CD8-positive, alpha-beta T cell (primary cell): ENCODE measurements at regions of chr10 and their contacts with region 1.

Region 1: DNA sequence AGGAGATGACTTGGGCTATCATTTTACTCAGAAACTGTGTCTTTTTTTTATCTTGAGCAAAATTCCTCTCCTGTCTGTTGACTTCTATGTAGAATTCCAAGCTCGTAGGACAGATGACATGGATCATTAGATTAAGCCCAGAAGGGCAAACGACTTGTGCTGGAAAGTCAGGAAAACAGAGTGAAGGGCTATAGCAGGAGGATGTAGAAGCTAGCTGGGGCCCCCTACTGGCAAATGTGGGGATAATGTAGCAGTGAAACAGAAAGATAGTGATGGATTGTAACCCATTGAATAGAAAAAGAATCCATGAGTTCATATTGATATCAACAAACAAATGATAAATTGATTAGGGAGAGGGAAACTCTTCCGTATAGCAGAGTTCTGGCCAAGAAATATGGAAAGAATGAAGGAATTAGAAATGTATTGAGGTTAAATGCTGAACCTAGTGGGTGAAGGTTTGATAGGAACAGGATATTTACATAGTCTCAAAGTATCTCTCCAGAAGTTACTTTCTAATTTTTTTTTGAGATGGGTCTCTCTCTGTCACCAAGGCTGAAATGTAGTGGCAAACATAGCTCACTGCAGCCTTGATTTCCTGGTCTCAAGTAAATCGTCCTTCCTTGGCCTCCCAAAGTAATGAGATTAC is 103.6 kb downstream of the LYZL1 start:
- DNase-seq: peak in 5 of 9 experiments; percentile 19 to 52 (median 33)
- ATAC-seq: peak; percentile 69
- H3K4me3 ChIP-seq: no peak overlapping the region
- H3K4me3 Mint-ChIP-seq: no peak overlapping the region
- H3K27ac ChIP-seq: no peak overlapping the region
- H3K27ac Mint-ChIP-seq: no peak overlapping the region
- H3K4me1 ChIP-seq: no peaks in the 10 kb centered on the region
- H3K4me1 Mint-ChIP-seq: no peaks in the 10 kb centered on the region
- H3K27me3 ChIP-seq: no peaks in the 10 kb centered on the region
- H3K27me3 Mint-ChIP-seq: peaks cover 8% of the 10 kb centered on the region
- CTCF ChIP-seq: peak; percentile 90

Region 2: GRCh38 chr10:28676968-28677887 is 715.3 kb before region 1 on chr10 and contains the start of gene BAMBI:
- CTCF ChIA-PET with region 1: no interaction called
- POLR2A ChIA-PET with region 1: no interaction called
- intact Hi-C with region 1: loop called (anchors 5 kb)
- DNase-seq: peak; percentile 76 to 95 (median 88)
- ATAC-seq: peak; percentile 96
- H3K4me3 ChIP-seq: peak within 1 kb of the TSS; percentile 53 to 59
- H3K4me3 Mint-ChIP-seq: peak within 1 kb of the TSS; percentile 86
- H3K27ac ChIP-seq: no peak within 1 kb of the TSS
- H3K27ac Mint-ChIP-seq: no peak within 1 kb of the TSS
- H3K4me1 ChIP-seq: peaks cover 34% of the 10 kb centered on the region
- H3K4me1 Mint-ChIP-seq: peaks cover 31% of the 10 kb centered on the region
- H3K27me3 ChIP-seq: peaks cover 19 to 20% of the 10 kb centered on the region in 2 experiments
- H3K27me3 Mint-ChIP-seq: peaks cover 68% of the 10 kb centered on the region
- CTCF ChIP-seq: peak; percentile 40
- total RNA-seq, gene BAMBI: 3.5 to 3.6 TPM

Region 3: GRCh38 chr10:29409241-29410057 is 16.9 kb after region 1 on chr10:
- CTCF ChIA-PET with region 1: interaction called, 14 read pairs
- POLR2A ChIA-PET with region 1: interaction called, 7 read pairs
- intact Hi-C with region 1: no loop called
- DNase-seq: peak in 8 of 9 experiments; percentile 20 to 66 (median 38)
- ATAC-seq: peak; percentile 62
- H3K4me3 ChIP-seq: peak overlapping the region; percentile 84 to 85
- H3K4me3 Mint-ChIP-seq: peak overlapping the region; percentile 96
- H3K27ac ChIP-seq: peak overlapping the region; percentile 47 to 60
- H3K27ac Mint-ChIP-seq: peak overlapping the region; percentile 92
- H3K4me1 ChIP-seq: peaks cover 6% of the 10 kb centered on the region
- H3K4me1 Mint-ChIP-seq: peaks cover 34% of the 10 kb centered on the region
- H3K27me3 ChIP-seq: no peaks in the 10 kb centered on the region
- H3K27me3 Mint-ChIP-seq: no peaks in the 10 kb centered on the region
- CTCF ChIP-seq: no peak